ENCODE measurements at regions of chr16 and their contacts with region 1.

Region 1: GRCh38 chr16:3074860-3075522 is 9.6 kb downstream of the IL32 start:
- DNase-seq: peak; percentile 93
- ATAC-seq: peak; percentile 75
- H3K4me3 Mint-ChIP-seq: peak overlapping the region; percentile 60
- H3K27ac Mint-ChIP-seq: peak overlapping the region; percentile 97
- H3K4me1 Mint-ChIP-seq: peaks cover 75% of the 10 kb centered on the region
- H3K27me3 Mint-ChIP-seq: no peaks in the 10 kb centered on the region
- CTCF ChIP-seq: no peak

Region 2: DNA sequence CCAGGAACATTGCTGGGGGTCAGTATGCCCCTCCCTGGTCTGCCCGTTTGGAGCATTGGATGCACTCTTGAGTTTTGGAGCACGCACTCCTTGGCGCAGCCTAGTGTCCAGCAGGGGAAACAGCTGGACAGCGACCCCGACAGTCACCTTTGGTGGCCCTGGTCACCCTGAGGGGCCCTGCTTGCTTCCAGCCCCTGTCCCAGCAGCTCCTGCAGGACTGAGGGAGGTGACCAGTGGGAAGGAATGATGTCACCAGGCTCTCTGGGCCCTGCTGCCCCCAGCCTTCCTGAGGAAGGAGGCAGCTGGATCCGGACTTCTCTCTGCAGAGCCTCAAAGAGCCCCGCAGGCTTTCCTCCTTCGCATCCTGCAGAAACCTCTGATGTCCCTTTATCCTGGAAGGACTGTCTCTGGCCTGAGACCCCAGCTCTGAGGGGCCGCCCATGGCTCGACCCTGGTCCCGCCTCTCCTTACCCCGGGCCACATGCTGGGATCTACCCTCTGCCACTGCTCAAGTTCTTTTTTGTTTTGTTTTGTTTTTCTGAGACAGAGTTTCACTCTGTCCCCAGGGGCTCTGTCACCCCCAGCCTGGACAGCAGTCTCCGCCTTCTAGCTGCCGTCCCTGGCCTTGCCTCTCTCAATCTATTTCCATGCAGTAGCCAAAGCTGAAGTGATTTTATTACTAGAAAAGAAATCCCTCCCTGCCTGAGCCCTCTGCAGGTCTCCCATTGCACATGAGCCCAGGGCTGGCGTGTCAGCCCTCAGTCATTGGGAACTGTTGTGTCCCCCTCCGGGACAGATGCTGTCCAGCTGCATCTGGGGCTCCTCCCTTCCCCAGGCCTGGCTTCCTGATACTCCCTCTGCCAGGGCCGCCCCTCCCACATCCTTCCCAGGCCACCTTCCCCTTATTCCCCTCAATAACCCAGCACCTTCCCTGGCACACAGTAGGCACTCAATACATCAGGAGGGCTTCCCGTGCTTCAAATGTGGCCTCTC is 12.5 kb after region 1 on chr16:
- CTCF ChIA-PET with region 1: interaction called, 5 read pairs
- POLR2A ChIA-PET with region 1: interaction called, 13 read pairs
- intact Hi-C with region 1: no loop called
- DNase-seq: no peak
- ATAC-seq: peak; percentile 39
- H3K4me3 Mint-ChIP-seq: no peak overlapping the region
- H3K27ac Mint-ChIP-seq: peak overlapping the region; percentile 37
- H3K4me1 Mint-ChIP-seq: peaks cover 25% of the 10 kb centered on the region
- H3K27me3 Mint-ChIP-seq: no peaks in the 10 kb centered on the region
- CTCF ChIP-seq: peak; percentile 19

Region 3: GRCh38 chr16:3099732-3100499 is 24.9 kb after region 1 on chr16:
- CTCF ChIA-PET with region 1: interaction called, 23 read pairs
- POLR2A ChIA-PET with region 1: interaction called, 7 read pairs
- intact Hi-C with region 1: no loop called
- DNase-seq: peak; percentile 98
- ATAC-seq: peak; percentile 92
- H3K4me3 Mint-ChIP-seq: peak overlapping the region; percentile 62
- H3K27ac Mint-ChIP-seq: peak overlapping the region; percentile 83
- H3K4me1 Mint-ChIP-seq: peaks cover 31% of the 10 kb centered on the region
- H3K27me3 Mint-ChIP-seq: no peaks in the 10 kb centered on the region
- CTCF ChIP-seq: no peak